GM23248 (cell line): ENCODE measurements at regions of chr11 and their contacts with region 1.

Region 1: GRCh38 chr11:124586238-124586860 is 16.6 kb downstream of the OR8A1 start:
- DNase-seq: peak; percentile 69
- H3K4me3 ChIP-seq: no peak overlapping the region
- H3K27ac ChIP-seq: no peak overlapping the region
- H3K4me1 ChIP-seq: no peaks in the 10 kb centered on the region
- H3K27me3 ChIP-seq: peaks cover 35% of the 10 kb centered on the region

Region 2: GRCh38 chr11:124415356-124415923 is 170.9 kb before region 1 on chr11:
- in situ Hi-C with region 1: loop called (anchors 10 kb)
- DNase-seq: peak; percentile 71
- H3K4me3 ChIP-seq: no peak overlapping the region
- H3K27ac ChIP-seq: no peak overlapping the region
- H3K4me1 ChIP-seq: no peaks in the 10 kb centered on the region
- H3K27me3 ChIP-seq: peaks cover 27% of the 10 kb centered on the region